ENCODE measurements at regions of chr6 and their contacts with region 1.

Region 1: DNA sequence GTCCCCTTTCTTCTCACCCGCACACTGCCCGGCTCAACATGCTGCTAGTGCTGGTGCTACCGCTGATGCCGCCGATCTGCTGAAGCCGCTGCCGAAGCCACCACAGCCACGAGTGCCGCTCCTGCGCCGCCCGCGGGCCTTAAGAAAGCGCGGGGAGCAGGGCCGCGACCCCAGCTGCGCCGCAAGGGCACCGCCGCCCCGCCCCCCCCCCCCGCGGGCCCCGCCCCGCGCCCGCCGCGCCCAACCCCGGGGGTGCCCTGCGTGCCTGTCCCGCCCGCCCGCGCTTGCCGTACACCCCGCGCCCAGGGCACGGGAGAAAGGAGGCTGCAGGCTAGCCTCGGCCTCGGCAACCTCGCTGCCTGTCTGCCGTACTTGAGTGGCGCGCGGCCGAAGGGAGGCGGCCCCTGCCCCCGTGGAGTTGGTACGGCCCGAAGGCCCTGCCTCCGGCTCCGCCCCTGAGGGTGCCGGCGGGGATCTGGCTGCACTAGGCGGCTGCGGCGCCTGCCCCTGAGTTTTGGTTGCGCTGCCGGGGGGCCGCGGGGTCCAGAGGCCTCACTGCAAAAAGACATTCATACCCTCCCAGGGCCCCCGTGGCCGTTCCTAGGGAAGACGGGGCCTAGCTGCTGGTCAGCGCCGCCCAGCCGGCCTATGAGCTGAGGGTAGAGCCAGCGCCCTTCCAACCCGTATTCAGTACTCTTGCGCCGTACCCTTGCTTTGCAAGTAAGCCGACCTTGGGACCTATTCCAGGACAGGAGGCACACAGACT is at the start of gene SOD2:
- DNase-seq: peak; percentile 86 to 92
- ATAC-seq: peak; percentile 73 to 84
- H3K4me3 ChIP-seq: peak within 1 kb of the TSS; percentile 83 to 94 (median 90)
- H3K27ac ChIP-seq: peak within 1 kb of the TSS; percentile 94 to 99 (median 96)
- H3K4me1 ChIP-seq: peaks cover 38 to 41% of the 10 kb centered on the region in 2 donors
- H3K27me3 ChIP-seq: no peaks in the 10 kb centered on the region
- CTCF ChIP-seq: no peak
- POLR2A ChIP-seq: peak; percentile 88 to 95
- total RNA-seq, gene SOD2: 10,850 to 22,513 (median 13,452) TPM

Region 2: GRCh38 chr6:159716247-159717096 is 23.2 kb after region 1 on chr6:
- in situ Hi-C with region 1: no loop called
- intact Hi-C with region 1: loop called (anchors 1 kb)
- DNase-seq: peak; percentile 86 to 88
- ATAC-seq: peak; percentile 94 to 96
- H3K4me3 ChIP-seq: peak overlapping the region; percentile 24 to 42 (median 38)
- H3K27ac ChIP-seq: peak overlapping the region; percentile 83 to 97 (median 94)
- H3K4me1 ChIP-seq: peaks cover 20 to 41% of the 10 kb centered on the region in 2 donors
- H3K27me3 ChIP-seq: no peaks in the 10 kb centered on the region
- CTCF ChIP-seq: peak in 3 of 5 experiments; percentile 8 to 24 (median 10)
- POLR2A ChIP-seq: peak in 1 of 2 donors; percentile 55

Region 3: DNA sequence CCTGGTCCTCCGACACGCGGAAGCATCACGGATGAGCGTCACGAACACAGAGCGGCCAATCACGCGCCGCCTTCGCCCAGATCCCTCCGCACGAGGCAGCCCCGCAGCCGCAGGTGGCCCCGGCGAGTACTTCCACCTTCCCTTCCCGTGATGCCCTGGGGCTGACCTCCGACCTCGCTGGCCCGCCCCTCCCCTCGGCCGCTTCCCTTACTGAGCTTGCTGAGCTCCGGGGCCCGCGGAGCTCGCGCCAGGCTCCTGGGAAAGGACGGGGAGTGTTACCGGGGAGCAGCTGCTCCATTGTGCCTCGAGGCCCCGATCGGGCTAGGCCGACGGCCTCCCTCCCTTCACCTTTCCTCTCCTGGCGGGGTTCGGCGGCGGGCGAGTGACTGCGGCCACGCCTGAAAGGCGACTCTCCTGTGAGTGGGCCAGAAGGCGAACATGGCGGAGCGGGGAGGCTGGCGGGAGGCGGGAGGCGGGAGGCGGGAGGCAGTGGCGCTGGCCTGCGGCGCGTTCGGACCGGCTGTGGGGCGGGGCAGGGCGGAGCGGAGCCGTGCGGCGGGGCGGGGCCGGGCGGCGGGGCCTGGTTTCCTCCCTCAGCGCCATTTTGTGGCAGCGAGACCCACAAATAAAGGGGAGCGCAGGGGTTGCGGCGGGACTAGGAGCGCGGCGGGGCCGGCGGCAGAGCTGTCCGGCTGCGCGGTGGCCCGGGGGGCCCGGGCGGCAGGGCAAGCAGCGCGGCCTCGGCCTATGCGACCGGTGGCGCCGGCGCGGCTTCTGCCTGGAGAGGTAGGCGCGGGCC is 33.8 kb after region 1 on chr6 and contains the start of gene WTAP:
- in situ Hi-C with region 1: no loop called
- intact Hi-C with region 1: loop called (anchors 1 kb)
- DNase-seq: peak; percentile 97 to 98
- ATAC-seq: peak; percentile 82 to 88
- H3K4me3 ChIP-seq: peak within 1 kb of the TSS; percentile 86 to 99 (median 90)
- H3K27ac ChIP-seq: peak within 1 kb of the TSS; percentile 99 to 100 (median 99)
- H3K4me1 ChIP-seq: peaks cover 49 to 50% of the 10 kb centered on the region in 2 donors
- H3K27me3 ChIP-seq: no peaks in the 10 kb centered on the region
- CTCF ChIP-seq: peak in 1 of 5 experiments; percentile 40
- POLR2A ChIP-seq: peak; percentile 75 to 93
- total RNA-seq, gene WTAP: 147 to 238 (median 193) TPM

Region 4: GRCh38 chr6:159761873-159762680 is 68.8 kb after region 1 on chr6 and contains the start of gene ACAT2:
- in situ Hi-C with region 1: no loop called
- intact Hi-C with region 1: loop called (anchors 2 kb)
- DNase-seq: peak; percentile 95 to 96
- ATAC-seq: peak; percentile 98 to 99
- H3K4me3 ChIP-seq: peak within 1 kb of the TSS; percentile 84 to 90 (median 88)
- H3K27ac ChIP-seq: peak within 1 kb of the TSS; percentile 96 to 99 (median 96)
- H3K4me1 ChIP-seq: peaks cover 13 to 19% of the 10 kb centered on the region in 2 donors
- H3K27me3 ChIP-seq: no peaks in the 10 kb centered on the region
- CTCF ChIP-seq: peak in 2 of 5 experiments; percentile 8 to 40
- POLR2A ChIP-seq: peak; percentile 47 to 68
- total RNA-seq, gene ACAT2: 0.59 to 4.6 (median 2.4) TPM

Region 5: DNA sequence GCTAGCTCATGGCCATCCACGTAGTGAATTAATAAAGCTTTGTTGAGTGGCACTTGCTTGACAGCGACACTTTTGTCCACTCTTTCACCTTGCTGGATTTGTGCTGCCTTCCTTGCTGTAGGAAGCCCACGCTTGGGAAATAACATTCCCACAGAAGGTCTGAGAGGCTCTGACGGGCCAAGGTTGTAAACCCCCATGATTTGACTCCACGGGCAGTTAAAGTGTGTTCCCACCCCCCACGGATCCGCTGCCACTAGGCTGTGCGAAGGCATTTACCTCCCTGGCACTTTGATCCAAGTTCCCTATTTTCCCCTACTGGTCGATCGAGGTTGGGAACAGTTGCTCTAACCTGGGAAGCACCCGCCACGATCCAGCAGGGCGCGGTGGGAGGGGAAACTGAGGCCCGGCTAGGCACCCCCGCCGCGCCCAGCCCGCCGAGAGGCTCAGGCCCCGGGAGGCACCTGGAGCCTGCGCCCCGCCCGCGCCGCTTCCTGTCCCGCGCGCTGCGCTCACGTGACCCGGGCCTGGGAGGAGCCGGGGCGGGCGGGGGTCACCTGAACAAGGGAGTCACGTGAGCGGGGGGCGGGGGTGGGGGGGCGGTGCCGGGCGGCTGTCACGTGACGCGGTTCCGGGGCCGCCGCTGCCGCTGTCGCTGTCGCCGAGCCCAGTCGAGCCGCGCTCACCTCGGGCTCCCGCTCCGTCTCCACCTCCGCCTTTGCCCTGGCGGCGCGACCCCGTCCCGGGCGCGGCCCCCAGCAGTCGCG is 275.3 kb after region 1 on chr6 and contains the start of gene IGF2R:
- in situ Hi-C with region 1: loop called in 2 of 4 experiments (anchors 10 to 25 kb)
- intact Hi-C with region 1: loop called (anchors 5 kb)
- DNase-seq: peak; percentile 91 to 95
- ATAC-seq: peak; percentile 73 to 79
- H3K4me3 ChIP-seq: peak within 1 kb of the TSS; percentile 79 to 96 (median 90)
- H3K27ac ChIP-seq: peak within 1 kb of the TSS; percentile 95 to 98 (median 96)
- H3K4me1 ChIP-seq: peaks cover 42 to 43% of the 10 kb centered on the region in 2 donors
- H3K27me3 ChIP-seq: no peaks in the 10 kb centered on the region
- CTCF ChIP-seq: peak in 2 of 5 experiments; percentile 13 to 48
- POLR2A ChIP-seq: peak; percentile 94 to 95
- total RNA-seq, gene IGF2R: 56.6 to 134 (median 108) TPM

Region 6: GRCh38 chr6:160069050-160069454 is 375.7 kb after region 1 on chr6:
- in situ Hi-C with region 1: no loop called
- intact Hi-C with region 1: loop called (anchors 10 kb)
- DNase-seq: no peak
- ATAC-seq: no peak
- H3K4me3 ChIP-seq: no peak overlapping the region
- H3K27ac ChIP-seq: no peak overlapping the region
- H3K4me1 ChIP-seq: peaks cover 10 to 28% of the 10 kb centered on the region in 2 donors
- H3K27me3 ChIP-seq: no peaks in the 10 kb centered on the region
- CTCF ChIP-seq: no peak
- POLR2A ChIP-seq: no peak